ENCODE measurements at regions of chr12 and their contacts with region 1.

Region 1: GRCh38 chr12:11545484-11546330 is 103.8 kb upstream of the ETV6 start:
- DNase-seq: peak; percentile 60
- H3K4me3 Mint-ChIP-seq: peak overlapping the region; percentile 26
- H3K27ac Mint-ChIP-seq: peak overlapping the region; percentile 81
- H3K4me1 Mint-ChIP-seq: peaks cover 55% of the 10 kb centered on the region
- H3K27me3 Mint-ChIP-seq: no peaks in the 10 kb centered on the region

Region 2: DNA sequence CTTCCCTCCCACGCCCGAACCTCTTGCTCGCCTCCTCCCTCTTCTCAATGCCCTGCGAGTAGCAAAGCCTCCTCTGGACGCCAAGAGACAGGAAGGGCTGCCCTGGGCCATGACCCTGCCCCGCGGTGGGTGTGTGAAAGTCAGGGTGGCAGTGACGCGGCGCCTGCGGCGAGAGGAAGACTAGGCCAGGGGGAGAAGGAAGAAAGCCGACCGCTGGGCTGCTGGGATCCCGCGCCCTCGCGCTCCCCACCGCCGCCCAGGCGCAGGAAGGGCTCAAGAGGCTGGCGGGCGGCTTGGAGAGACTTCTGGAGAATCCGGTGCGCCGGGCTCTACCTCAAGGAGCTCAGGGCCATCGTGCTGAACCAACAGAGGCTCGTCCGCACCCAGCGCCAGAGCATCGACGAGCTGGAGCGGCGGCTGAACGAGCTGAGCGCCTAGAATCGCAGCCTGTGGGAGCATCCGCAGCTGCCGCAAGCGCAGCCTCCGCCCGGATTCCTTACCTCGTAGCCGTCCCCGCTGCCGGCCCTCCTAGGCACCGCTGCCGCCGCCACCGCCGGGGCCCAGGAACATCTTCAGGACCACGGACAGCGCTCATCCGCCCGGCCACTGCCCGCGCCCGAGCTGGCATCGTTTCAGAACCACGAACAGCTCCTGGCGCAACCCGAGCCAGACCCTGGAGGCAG is 45.4 kb before region 1 on chr12:
- CTCF ChIA-PET with region 1: no interaction called
- intact Hi-C with region 1: loop called (anchors 2 kb)
- DNase-seq: peak; percentile 90
- H3K4me3 Mint-ChIP-seq: no peak overlapping the region
- H3K27ac Mint-ChIP-seq: no peak overlapping the region
- H3K4me1 Mint-ChIP-seq: peaks cover 6% of the 10 kb centered on the region
- H3K27me3 Mint-ChIP-seq: peaks cover 42% of the 10 kb centered on the region

Region 3: DNA sequence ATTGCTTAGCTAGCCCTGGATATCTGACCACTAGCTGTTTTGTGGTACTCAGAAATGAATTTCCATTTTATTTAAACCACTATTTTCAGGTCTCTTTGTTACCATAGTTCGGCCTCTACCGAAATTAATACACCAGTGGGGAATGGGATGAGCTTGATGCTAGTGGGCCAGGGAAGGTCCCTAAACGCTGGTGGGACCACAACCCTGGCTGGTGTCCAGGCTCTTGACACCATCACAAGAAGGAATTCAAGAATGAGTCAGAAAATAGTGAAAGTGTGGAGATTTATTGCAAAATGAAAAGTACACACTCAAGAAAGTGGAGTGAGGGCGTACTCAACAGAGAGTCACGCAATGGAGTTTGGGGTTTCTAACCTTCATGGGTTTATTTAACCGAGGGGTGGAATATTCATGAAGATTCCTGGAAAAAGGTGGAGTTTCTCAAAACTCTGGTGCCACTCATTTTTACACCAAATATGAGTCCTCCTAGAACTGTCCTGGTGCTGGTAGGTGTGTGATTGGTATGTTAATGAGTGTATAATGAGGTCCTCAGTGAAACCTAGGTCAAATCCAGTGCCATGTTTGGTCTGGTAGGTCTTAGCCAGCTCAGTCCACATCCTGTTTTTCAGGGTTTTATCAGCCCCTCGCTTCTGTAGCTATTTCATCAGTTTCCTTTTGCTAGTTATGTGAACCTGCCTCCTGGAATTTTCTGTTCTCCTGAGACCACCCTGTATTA is 760.0 kb after region 1 on chr12:
- CTCF ChIA-PET with region 1: no interaction called
- intact Hi-C with region 1: no loop called
- DNase-seq: no peak
- H3K4me3 Mint-ChIP-seq: no peak overlapping the region
- H3K27ac Mint-ChIP-seq: no peak overlapping the region
- H3K4me1 Mint-ChIP-seq: no peaks in the 10 kb centered on the region
- H3K27me3 Mint-ChIP-seq: no peaks in the 10 kb centered on the region

Measured in activated naive CD4-positive, alpha-beta T cell treated with anti-CD3 and anti-CD28 coated beads for 36 hours (primary cell).